PC-9 (cell line): ENCODE measurements at regions of chr16 and their contacts with region 1.

Region 1: GRCh38 chr16:26169473-26169872 is 477.7 kb downstream of the HS3ST4 start:
- DNase-seq: no peak
- H3K4me3 ChIP-seq: no peak overlapping the region
- H3K27ac ChIP-seq: no peak overlapping the region
- H3K4me1 ChIP-seq: no peaks in the 10 kb centered on the region
- H3K27me3 ChIP-seq: peaks cover 8% of the 10 kb centered on the region
- CTCF ChIP-seq: no peak

Region 2: DNA sequence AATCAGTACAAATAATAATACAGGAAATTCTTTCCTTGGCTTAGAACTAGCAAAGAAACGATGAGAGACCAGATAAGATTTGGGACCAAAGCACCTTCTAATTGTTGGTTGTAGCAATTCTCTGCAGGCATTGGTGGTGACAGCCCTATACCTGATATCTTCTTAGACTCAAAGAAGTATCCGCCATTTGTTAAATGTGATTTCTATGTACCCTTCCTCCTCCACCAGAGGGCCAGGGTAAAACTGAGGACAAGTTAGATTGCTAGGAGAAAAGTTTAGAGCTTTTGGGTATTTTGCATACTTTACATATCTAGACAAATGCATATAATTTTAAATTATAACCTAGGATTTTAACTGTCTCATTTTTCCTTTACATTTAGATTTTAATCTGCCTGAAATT is 173.4 kb before region 1 on chr16:
- CTCF ChIA-PET with region 1: no interaction called
- POLR2A ChIA-PET with region 1: no interaction called
- intact Hi-C with region 1: loop called (anchors 5 kb)
- DNase-seq: no peak
- H3K4me3 ChIP-seq: no peak overlapping the region
- H3K27ac ChIP-seq: no peak overlapping the region
- H3K4me1 ChIP-seq: no peaks in the 10 kb centered on the region
- H3K27me3 ChIP-seq: no peaks in the 10 kb centered on the region
- CTCF ChIP-seq: peak; percentile 36

Region 3: GRCh38 chr16:26118575-26118974 is 50.9 kb before region 1 on chr16:
- CTCF ChIA-PET with region 1: no interaction called
- POLR2A ChIA-PET with region 1: no interaction called
- intact Hi-C with region 1: no loop called
- DNase-seq: no peak
- H3K4me3 ChIP-seq: no peak overlapping the region
- H3K27ac ChIP-seq: no peak overlapping the region
- H3K4me1 ChIP-seq: no peaks in the 10 kb centered on the region
- H3K27me3 ChIP-seq: no peaks in the 10 kb centered on the region; the same call in 1 of the 2 replicates
- CTCF ChIP-seq: no peak

Region 4: GRCh38 chr16:26133416-26134093 is 35.9 kb before region 1 on chr16:
- CTCF ChIA-PET with region 1: no interaction called
- POLR2A ChIA-PET with region 1: no interaction called
- intact Hi-C with region 1: no loop called
- DNase-seq: no peak
- H3K4me3 ChIP-seq: no peak overlapping the region
- H3K27ac ChIP-seq: no peak overlapping the region
- H3K4me1 ChIP-seq: no peaks in the 10 kb centered on the region
- H3K27me3 ChIP-seq: peaks cover 7% of the 10 kb centered on the region; the same call in 1 of the 2 replicates
- CTCF ChIP-seq: no peak

Region 5: DNA sequence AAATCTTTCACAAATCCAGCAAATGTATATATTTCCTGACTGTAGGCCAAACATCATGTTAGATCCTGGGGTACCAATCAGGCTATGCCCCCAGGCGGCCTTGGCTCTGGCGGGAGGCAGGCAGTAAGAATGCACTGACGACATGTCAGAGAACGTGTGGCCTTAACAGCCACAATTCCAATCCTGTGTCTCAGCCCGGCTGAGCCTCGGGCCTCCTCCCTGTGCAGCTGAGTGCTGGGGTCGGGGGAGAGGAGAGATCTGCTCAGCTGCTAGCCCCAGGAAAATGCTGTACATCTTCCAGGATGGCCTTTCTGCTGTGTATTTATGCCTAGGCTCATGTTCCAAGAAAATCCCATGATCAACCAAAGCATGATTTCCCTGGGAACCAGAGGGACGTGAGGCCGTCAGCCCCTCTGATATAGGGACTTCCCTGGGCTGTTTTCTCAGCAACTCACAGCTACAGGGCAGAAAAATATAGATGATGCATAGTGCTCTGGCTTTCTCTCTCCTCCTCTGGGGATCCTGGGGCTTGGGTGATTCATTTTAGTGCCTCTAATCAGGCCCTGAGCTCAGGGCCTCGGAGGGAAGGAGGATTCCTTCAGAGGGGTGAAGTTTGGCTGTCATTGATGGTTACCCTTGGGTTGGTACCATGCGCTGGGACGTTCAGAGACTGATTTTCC is 126.3 kb after region 1 on chr16:
- CTCF ChIA-PET with region 1: no interaction called
- POLR2A ChIA-PET with region 1: no interaction called
- intact Hi-C with region 1: no loop called
- DNase-seq: no peak
- H3K4me3 ChIP-seq: no peak overlapping the region
- H3K27ac ChIP-seq: no peak overlapping the region
- H3K4me1 ChIP-seq: no peaks in the 10 kb centered on the region
- H3K27me3 ChIP-seq: peaks cover 16% of the 10 kb centered on the region; the same call in 1 of the 2 replicates
- CTCF ChIP-seq: no peak